ENCODE measurements at regions of chr20 and their contacts with region 1.

Region 1: DNA sequence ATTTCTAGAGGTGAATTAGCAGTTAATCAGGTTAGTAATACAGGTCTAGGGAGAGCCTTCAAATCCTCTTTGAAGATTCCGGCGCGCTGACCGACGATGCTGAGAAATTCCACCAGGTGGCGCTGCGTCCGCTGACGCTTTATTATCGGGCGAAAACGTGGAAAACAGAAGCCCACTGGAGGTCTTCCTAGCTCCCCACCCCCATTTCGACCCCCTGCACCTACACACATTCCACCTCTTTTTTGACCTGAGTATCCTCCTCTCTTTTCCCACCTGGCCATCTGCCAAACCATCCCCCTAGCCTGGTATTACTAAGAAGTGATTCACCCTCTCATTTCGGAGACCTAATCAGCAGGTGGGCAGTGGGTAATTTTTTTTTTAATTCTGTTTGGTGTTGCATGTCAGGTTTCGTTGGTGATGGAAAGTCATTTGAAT is 65.4 kb upstream of the RIN2 start:
- DNase-seq: peak; percentile 82
- ATAC-seq: peak; percentile 53
- H3K4me3 ChIP-seq: peak overlapping the region; percentile 37
- H3K27ac ChIP-seq: peak overlapping the region; percentile 86
- H3K4me1 ChIP-seq: peaks cover 46% of the 10 kb centered on the region
- H3K27me3 ChIP-seq: no peaks in the 10 kb centered on the region
- CTCF ChIP-seq: peak; percentile 98

Region 2: DNA sequence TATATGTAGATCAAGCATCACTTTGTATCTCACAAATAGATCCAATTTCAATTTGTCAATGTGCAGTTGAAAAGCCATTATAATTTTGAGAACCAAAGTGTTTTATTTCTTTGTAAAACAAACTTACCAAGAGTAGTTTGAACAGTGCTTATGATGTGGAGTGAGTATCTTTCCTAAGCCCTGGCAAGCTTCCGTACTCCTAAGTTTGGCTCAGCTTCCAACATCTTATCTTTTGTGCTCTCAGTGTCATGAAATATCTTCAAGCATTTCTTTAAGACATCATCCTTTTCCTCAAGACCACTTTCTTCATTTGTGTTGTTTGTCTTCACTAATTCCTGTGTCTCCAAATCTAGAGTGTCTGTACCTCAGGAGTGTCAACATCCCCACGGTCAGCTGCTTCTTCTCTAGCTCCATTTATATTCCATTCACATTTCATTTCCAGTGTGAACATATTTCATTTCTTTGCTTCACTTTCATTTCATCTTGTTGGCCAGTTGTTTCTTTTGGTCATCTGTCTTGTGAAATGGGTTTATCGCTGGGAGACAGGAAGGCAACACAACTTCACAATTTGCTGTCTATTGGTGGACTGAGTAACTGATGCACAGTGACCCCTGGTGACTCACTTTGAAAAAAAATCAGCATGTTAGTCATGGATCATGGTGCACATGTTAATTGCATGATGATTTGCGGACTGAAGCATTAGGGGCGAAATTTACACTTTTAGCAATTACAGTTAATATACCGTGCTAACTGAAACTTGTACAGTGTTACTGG is 443.4 kb before region 1 on chr20:
- CTCF ChIA-PET with region 1: no interaction called
- POLR2A ChIA-PET with region 1: no interaction called
- intact Hi-C with region 1: no loop called
- DNase-seq: peak; percentile 45
- ATAC-seq: no peak
- H3K4me3 ChIP-seq: no peak overlapping the region
- H3K27ac ChIP-seq: no peak overlapping the region
- H3K4me1 ChIP-seq: no peaks in the 10 kb centered on the region
- H3K27me3 ChIP-seq: peaks cover 51% of the 10 kb centered on the region
- CTCF ChIP-seq: peak; percentile 44; the same call in 1 of the 2 replicates

Region 3: GRCh38 chr20:19735446-19735845 is 42.7 kb after region 1 on chr20:
- CTCF ChIA-PET with region 1: no interaction called
- POLR2A ChIA-PET with region 1: no interaction called
- intact Hi-C with region 1: loop called (anchors 1 kb)
- DNase-seq: peak; percentile 97
- ATAC-seq: peak; percentile 90
- H3K4me3 ChIP-seq: 0 out of 2 replicates have a peak overlapping the region, but pooled peaks have one; percentile 3
- H3K27ac ChIP-seq: peak overlapping the region; percentile 96
- H3K4me1 ChIP-seq: peaks cover 48% of the 10 kb centered on the region
- H3K27me3 ChIP-seq: no peaks in the 10 kb centered on the region
- CTCF ChIP-seq: no peak

Region 4: GRCh38 chr20:19746396-19746795 is 53.7 kb after region 1 on chr20:
- CTCF ChIA-PET with region 1: no interaction called
- POLR2A ChIA-PET with region 1: no interaction called
- intact Hi-C with region 1: no loop called
- DNase-seq: no peak
- ATAC-seq: peak; percentile 60
- H3K4me3 ChIP-seq: no peak overlapping the region
- H3K27ac ChIP-seq: no peak overlapping the region
- H3K4me1 ChIP-seq: no peaks in the 10 kb centered on the region
- H3K27me3 ChIP-seq: no peaks in the 10 kb centered on the region
- CTCF ChIP-seq: no peak

Region 5: GRCh38 chr20:19802492-19803158 is 109.9 kb after region 1 on chr20:
- CTCF ChIA-PET with region 1: no interaction called
- POLR2A ChIA-PET with region 1: no interaction called
- intact Hi-C with region 1: loop called (anchors 1 kb)
- DNase-seq: peak; percentile 87
- ATAC-seq: peak; percentile 88
- H3K4me3 ChIP-seq: no peak overlapping the region
- H3K27ac ChIP-seq: peak overlapping the region; percentile 52
- H3K4me1 ChIP-seq: peaks cover 28% of the 10 kb centered on the region
- H3K27me3 ChIP-seq: no peaks in the 10 kb centered on the region
- CTCF ChIP-seq: peak; percentile 84

Region 6: DNA sequence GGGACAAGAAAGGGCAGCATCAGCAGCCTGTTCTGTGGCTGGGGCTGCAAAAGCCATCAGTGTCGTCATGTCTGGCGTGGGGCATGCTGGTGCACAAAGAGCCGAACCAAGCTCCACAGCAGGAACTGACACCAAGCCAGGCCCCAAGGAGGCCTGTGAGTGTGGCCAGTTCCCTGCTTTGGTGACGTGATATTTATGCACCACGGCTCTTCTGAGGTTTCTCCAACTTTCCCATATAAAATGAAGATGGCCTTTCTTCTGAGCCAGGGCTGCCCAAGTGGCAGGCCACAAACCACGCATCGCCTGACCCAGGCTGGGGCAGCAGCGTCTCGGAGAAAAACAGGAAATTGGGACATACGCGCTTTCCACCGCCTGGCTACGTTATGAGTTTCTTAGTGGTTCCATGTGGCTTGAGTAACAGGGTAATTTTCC is 175.3 kb after region 1 on chr20:
- CTCF ChIA-PET with region 1: no interaction called
- POLR2A ChIA-PET with region 1: no interaction called
- intact Hi-C with region 1: no loop called
- DNase-seq: no peak
- ATAC-seq: no peak
- H3K4me3 ChIP-seq: no peak overlapping the region
- H3K27ac ChIP-seq: no peak overlapping the region
- H3K4me1 ChIP-seq: peaks cover 25% of the 10 kb centered on the region
- H3K27me3 ChIP-seq: no peaks in the 10 kb centered on the region
- CTCF ChIP-seq: no peak

Region 7: GRCh38 chr20:19889011-19889953 is 196.6 kb after region 1 on chr20:
- CTCF ChIA-PET with region 1: no interaction called
- POLR2A ChIA-PET with region 1: no interaction called
- intact Hi-C with region 1: loop called (anchors 5 kb)
- DNase-seq: peak; percentile 52
- ATAC-seq: peak; percentile 29
- H3K4me3 ChIP-seq: peak overlapping the region; percentile 60
- H3K27ac ChIP-seq: peak overlapping the region; percentile 91
- H3K4me1 ChIP-seq: peaks cover 66% of the 10 kb centered on the region
- H3K27me3 ChIP-seq: no peaks in the 10 kb centered on the region
- CTCF ChIP-seq: no peak

Measured in PC-3 (cell line).